ENCODE measurements at regions of chr9 and their contacts with region 1.

Region 1: GRCh38 chr9:5437254-5438216 is at the start of gene PLGRKT:
- DNase-seq: peak; percentile 88
- H3K4me3 ChIP-seq: peak within 1 kb of the TSS; percentile 53 to 76 (median 69)
- H3K27ac ChIP-seq: peak within 1 kb of the TSS; percentile 93
- H3K4me1 ChIP-seq: peaks cover 30% of the 10 kb centered on the region
- H3K27me3 ChIP-seq: no peaks in the 10 kb centered on the region
- CTCF ChIP-seq: peak; percentile 7 to 25
- POLR2A ChIP-seq: peak; percentile 81
- total RNA-seq, gene PLGRKT: 20.3 and 21.2 TPM in 2 replicates

Region 2: DNA sequence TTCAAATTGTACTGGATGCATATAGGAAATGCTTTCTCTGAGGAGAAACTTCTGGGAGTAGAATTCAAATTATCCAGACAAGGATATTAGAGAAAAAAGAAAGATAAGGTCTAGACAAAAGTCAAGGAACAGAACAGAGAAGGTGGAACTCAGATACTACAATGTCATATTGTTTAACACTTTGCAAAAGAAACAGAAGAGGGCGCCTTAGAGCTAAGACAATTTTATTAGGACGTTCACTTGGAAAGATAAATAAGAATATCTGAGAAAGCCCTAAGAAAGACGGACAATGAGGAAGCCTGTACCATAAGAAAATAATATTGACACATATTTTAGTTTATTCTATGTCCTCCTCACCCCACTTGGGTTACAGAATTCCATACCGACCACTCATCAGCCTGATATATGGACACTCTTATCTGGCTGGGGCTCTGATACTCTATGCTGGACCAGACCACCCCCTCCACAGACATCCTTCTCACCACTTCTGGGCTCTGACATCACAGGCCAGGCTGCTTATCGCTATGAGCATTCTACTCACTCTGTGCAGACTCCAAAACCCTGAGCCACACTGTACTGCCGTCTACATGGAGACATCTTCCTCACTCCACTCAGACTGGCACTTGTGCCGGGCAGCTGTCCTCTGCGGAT is 687.4 kb before region 1 on chr9:
- CTCF ChIA-PET with region 1: interaction called, 10 read pairs
- POLR2A ChIA-PET with region 1: no interaction called
- dilution Hi-C with region 1: no loop called
- intact Hi-C with region 1: no loop called
- DNase-seq: peak; percentile 57
- H3K4me3 ChIP-seq: no peak overlapping the region
- H3K27ac ChIP-seq: no peak overlapping the region
- H3K4me1 ChIP-seq: no peaks in the 10 kb centered on the region
- H3K27me3 ChIP-seq: no peaks in the 10 kb centered on the region
- CTCF ChIP-seq: peak; percentile 32 to 42
- POLR2A ChIP-seq: no peak

Region 3: DNA sequence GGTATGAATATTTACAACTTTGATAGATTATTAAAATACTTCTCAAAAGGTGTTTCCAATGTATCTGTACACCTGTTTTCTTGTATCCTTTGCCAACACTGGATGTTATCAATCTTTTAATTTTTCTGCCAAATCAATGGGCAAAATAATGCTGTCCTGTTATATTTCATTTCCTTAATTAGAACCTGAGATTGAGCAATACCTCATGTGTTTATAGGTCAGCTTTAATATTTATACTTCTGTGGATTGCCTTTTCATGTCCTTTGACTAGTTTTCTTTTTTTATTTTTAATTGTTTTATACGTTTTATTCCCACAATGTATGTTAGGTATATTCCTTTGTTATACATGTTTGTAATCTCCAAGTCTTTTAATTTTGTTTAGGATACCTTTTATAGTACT is 374.9 kb before region 1 on chr9:
- CTCF ChIA-PET with region 1: no interaction called
- POLR2A ChIA-PET with region 1: no interaction called
- dilution Hi-C with region 1: no loop called
- intact Hi-C with region 1: no loop called
- DNase-seq: no peak
- H3K4me3 ChIP-seq: no peak overlapping the region
- H3K27ac ChIP-seq: no peak overlapping the region
- H3K4me1 ChIP-seq: no peaks in the 10 kb centered on the region
- H3K27me3 ChIP-seq: no peaks in the 10 kb centered on the region
- CTCF ChIP-seq: no peak
- POLR2A ChIP-seq: no peak

Region 4: GRCh38 chr9:5186416-5187169 is 250.9 kb before region 1 on chr9:
- CTCF ChIA-PET with region 1: interaction called, 84 read pairs
- POLR2A ChIA-PET with region 1: no interaction called
- dilution Hi-C with region 1: loop called (anchors 25 kb)
- intact Hi-C with region 1: loop called (anchors 1 kb)
- DNase-seq: peak; percentile 69
- H3K4me3 ChIP-seq: no peak overlapping the region
- H3K27ac ChIP-seq: no peak overlapping the region
- H3K4me1 ChIP-seq: no peaks in the 10 kb centered on the region
- H3K27me3 ChIP-seq: no peaks in the 10 kb centered on the region
- CTCF ChIP-seq: peak; percentile 64 to 73
- POLR2A ChIP-seq: no peak

Region 5: GRCh38 chr9:5389109-5389732 is 48.3 kb before region 1 on chr9:
- CTCF ChIA-PET with region 1: interaction called, 3 read pairs
- POLR2A ChIA-PET with region 1: no interaction called
- dilution Hi-C with region 1: no loop called
- intact Hi-C with region 1: loop called (anchors 1 kb)
- DNase-seq: no peak
- H3K4me3 ChIP-seq: no peak overlapping the region
- H3K27ac ChIP-seq: no peak overlapping the region
- H3K4me1 ChIP-seq: peaks cover 11% of the 10 kb centered on the region
- H3K27me3 ChIP-seq: no peaks in the 10 kb centered on the region
- CTCF ChIP-seq: no peak
- POLR2A ChIP-seq: no peak

Region 6: GRCh38 chr9:5510360-5510931 is 72.9 kb after region 1 on chr9 and contains the start of gene PDCD1LG2:
- CTCF ChIA-PET with region 1: interaction called, 3 read pairs
- POLR2A ChIA-PET with region 1: no interaction called
- dilution Hi-C with region 1: no loop called
- intact Hi-C with region 1: loop called (anchors 1 kb)
- DNase-seq: peak; percentile 69
- H3K4me3 ChIP-seq: peak within 1 kb of the TSS; percentile 2 to 49 (median 7)
- H3K27ac ChIP-seq: peak within 1 kb of the TSS; percentile 95
- H3K4me1 ChIP-seq: peaks cover 47% of the 10 kb centered on the region
- H3K27me3 ChIP-seq: no peaks in the 10 kb centered on the region
- CTCF ChIP-seq: no peak
- POLR2A ChIP-seq: peak; percentile 79
- total RNA-seq, gene PDCD1LG2: 9.5 and 9.7 TPM in 2 replicates

Region 7: GRCh38 chr9:5593904-5594303 is 156.4 kb after region 1 on chr9:
- CTCF ChIA-PET with region 1: interaction called, 23 read pairs
- POLR2A ChIA-PET with region 1: no interaction called
- dilution Hi-C with region 1: no loop called
- intact Hi-C with region 1: loop called (anchors 1 kb)
- DNase-seq: no peak
- H3K4me3 ChIP-seq: no peak overlapping the region
- H3K27ac ChIP-seq: no peak overlapping the region
- H3K4me1 ChIP-seq: peaks cover 6% of the 10 kb centered on the region
- H3K27me3 ChIP-seq: no peaks in the 10 kb centered on the region
- CTCF ChIP-seq: no peak
- POLR2A ChIP-seq: no peak